ENCODE measurements at regions of chr1 and their contacts with region 1.

Region 1: DNA sequence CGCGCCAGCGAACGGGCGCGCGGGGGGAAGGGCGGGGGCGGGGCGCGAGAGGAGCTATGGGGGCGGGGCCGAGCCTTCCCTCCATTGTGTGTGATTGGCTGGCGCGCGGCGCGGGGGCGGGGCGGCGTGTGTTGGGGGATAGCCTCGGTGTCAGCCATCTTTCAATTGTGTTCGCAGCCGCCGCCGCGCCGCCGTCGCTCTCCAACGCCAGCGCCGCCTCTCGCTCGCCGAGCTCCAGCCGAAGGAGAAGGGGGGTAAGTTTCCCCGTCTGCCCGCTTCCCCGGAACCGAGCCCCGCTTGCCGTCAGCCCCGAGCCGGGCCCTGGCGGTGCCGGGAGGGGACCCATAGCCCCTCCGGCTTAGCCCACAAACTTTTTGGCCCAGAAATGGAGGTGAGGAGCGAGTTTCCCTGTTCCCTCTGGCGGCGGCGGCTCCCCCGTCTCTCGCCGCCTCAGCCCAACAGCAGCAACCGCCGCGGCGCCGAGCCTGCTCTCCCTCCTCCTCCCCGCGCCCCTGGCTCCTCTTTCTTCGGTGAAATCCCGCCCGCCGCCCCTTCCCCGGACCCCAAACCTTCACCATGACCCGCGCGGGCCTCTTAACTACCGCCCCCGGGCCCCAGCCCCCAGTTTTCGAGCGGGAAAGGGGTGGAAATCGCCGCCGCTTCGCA is at the start of gene H3-3A:
- H3K4me3 Mint-ChIP-seq: peak within 1 kb of the TSS; percentile 99
- H3K27ac Mint-ChIP-seq: peak within 1 kb of the TSS; percentile 99
- H3K4me1 Mint-ChIP-seq: peaks cover 40% of the 10 kb centered on the region
- H3K27me3 Mint-ChIP-seq: no peaks in the 10 kb centered on the region

Region 2: GRCh38 chr1:226034482-226034881 is 28.2 kb before region 1 on chr1:
- intact Hi-C with region 1: loop called (anchors 1 kb)
- H3K4me3 Mint-ChIP-seq: no peak overlapping the region
- H3K27ac Mint-ChIP-seq: peak overlapping the region; percentile 92
- H3K4me1 Mint-ChIP-seq: peaks cover 50% of the 10 kb centered on the region
- H3K27me3 Mint-ChIP-seq: no peaks in the 10 kb centered on the region

Region 3: GRCh38 chr1:226046240-226046639 is 16.5 kb before region 1 on chr1:
- intact Hi-C with region 1: loop called (anchors 2 kb)
- H3K4me3 Mint-ChIP-seq: no peak overlapping the region
- H3K27ac Mint-ChIP-seq: peak overlapping the region; percentile 26
- H3K4me1 Mint-ChIP-seq: peaks cover 57% of the 10 kb centered on the region
- H3K27me3 Mint-ChIP-seq: no peaks in the 10 kb centered on the region

Region 4: DNA sequence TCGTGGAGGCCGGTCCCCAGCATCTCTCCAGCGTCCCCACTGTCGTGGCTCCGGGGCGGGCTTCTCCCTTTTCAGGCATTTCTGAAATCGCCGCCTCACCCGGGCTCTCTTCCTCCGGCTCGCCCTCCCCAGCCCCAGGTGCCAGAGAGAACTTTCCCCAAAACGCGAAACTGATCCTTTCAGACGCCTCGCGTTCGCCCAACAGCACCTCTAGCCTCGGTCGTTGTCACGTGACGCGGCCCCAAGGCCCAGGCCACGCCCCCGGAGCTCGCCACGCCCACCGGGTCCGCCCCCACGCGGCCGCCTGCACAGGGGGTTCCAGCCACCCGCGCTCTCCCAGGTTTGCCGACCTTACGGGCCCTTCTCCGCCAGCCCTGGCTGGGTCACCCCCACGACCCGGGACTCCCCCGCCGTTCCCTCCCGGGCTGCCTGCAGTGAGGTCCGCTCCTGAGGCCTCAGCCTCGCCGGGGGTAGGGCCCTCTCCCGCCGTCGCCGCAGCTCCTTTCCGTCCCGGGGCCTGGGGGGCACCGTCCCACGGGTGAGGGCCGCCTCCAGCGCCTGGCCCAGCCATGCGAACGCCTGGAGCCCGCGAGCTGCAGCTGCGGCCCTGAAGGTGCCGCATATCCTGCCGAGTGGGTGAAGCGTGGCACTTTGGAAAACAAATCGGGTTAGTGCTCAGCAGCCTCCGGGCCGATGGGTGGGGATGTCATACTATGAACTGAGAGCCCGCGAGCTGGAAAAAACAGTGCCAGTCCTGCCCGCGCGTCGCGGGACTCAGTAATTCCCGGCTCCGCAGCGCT is 20.8 kb after region 1 on chr1:
- intact Hi-C with region 1: no loop called
- H3K4me3 Mint-ChIP-seq: peak overlapping the region; percentile 90
- H3K27ac Mint-ChIP-seq: peak overlapping the region; percentile 84
- H3K4me1 Mint-ChIP-seq: peaks cover 10% of the 10 kb centered on the region
- H3K27me3 Mint-ChIP-seq: peaks cover 23% of the 10 kb centered on the region

Region 5: DNA sequence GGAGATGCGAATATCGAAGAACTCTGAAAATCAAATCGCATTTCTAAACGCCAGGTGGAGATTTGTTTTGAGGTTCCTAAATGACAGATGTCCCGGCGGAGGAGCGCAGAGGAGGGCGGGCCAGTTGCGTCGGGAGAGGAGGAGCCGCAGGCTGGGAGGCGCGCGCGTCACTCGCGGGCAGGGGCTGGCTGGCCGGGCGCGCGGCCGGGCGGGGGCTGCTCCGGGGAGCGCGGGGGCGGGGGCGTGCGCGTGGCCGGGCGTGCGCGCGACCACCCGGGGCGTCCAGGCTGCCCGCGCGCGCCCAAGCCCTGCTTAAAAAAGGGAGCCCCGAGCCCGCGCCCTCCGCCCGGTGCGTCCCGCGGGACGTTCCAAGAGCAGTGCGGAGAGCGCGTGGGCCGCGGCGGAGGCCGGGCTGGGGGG is 47.1 kb after region 1 on chr1:
- intact Hi-C with region 1: loop called (anchors 2 kb)
- H3K4me3 Mint-ChIP-seq: peak overlapping the region; percentile 82
- H3K27ac Mint-ChIP-seq: peak overlapping the region; percentile 96
- H3K4me1 Mint-ChIP-seq: peaks cover 35% of the 10 kb centered on the region
- H3K27me3 Mint-ChIP-seq: peaks cover 9% of the 10 kb centered on the region

Region 6: DNA sequence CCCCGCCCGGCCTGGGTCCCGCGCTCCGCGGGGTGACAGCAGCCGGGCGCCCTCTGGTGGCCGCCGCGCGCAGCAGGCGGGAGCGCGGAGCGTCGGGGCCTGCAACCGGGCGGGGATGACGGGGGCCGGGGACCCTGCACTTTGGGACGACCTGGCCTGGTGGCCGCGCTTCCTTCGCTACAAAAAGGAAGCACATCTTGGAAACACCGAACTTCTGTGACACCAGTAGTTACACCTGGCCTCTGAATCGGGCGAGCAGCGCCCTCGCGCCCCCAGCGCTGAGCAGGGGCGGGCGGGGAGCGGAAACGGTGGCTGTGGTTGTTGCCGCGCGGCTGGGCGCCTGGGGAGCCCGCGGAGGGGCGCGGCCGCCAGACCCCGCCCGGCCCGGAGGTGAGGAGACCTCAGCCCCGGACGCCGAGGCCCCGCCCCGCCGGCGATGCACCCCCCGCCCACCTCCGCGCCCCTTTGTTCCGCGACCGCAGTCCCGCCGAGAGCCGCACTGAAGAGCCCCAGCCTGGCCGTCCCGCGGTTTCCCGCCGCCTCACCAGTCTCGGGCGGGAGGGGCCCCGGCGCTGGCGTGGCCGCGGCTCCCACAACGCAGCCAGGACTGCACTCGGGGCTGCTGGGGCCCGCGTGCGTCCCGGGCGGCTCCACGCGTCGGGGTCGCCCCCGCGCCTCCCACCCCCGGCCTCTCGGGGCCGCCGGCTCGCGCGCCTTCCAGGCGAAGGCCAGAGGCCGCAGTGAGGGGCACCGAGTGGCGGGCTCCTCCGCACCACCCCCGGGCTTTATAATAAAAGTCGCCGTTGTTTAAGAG is 59.1 kb after region 1 on chr1:
- intact Hi-C with region 1: loop called (anchors 1 kb)
- H3K4me3 Mint-ChIP-seq: peak overlapping the region; percentile 74
- H3K27ac Mint-ChIP-seq: peak overlapping the region; percentile 78
- H3K4me1 Mint-ChIP-seq: peaks cover 27% of the 10 kb centered on the region
- H3K27me3 Mint-ChIP-seq: peaks cover 49% of the 10 kb centered on the region

Region 7: DNA sequence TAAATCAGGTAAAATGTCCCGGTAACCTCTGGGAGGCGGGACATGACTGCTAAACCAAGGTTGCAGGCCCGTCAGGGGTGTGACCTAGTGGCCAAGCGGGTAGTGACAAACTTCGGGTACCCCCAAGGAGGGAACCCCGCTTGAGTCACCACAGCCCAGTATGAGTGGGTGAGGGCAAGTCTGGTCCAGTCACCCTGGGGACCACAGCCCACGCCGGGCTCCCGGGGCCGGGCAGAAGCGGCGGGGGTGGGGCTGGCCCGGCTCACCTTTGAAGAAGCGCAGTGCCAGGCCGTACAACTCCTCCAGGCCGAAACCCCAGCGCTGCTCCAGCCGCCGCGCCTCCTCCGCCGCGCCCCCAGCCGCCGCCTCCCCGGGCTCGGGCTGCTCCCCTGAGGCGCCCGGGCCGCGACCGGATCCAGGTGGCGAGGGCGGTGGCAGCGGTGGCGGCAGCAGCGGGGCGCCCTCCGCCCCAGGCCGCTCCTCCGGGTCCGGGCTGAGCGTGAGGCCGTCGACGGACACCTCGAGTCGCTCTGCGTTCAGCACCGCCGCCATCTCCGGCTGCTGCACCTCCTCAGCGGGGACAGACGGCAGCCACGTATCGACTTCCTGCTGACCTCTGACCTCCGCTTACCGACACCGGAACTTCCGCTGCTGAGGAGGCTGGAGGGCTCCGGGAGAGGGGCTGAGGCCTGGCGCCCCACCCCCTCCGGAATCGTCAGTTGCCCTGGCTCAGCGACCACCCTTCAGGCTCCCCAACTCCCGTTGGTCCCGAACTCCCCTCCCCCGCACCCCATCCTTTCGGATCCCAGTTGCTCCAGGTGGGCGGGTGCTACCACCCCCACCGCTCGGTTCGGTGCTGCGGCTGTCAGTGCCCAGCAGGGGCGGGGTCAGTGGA is 123.7 kb after region 1 on chr1 and contains the start of gene ACBD3:
- intact Hi-C with region 1: loop called (anchors 5 kb)
- H3K4me3 Mint-ChIP-seq: peak within 1 kb of the TSS; percentile 88
- H3K27ac Mint-ChIP-seq: peak within 1 kb of the TSS; percentile 91
- H3K4me1 Mint-ChIP-seq: peaks cover 38% of the 10 kb centered on the region
- H3K27me3 Mint-ChIP-seq: no peaks in the 10 kb centered on the region

Region 8: DNA sequence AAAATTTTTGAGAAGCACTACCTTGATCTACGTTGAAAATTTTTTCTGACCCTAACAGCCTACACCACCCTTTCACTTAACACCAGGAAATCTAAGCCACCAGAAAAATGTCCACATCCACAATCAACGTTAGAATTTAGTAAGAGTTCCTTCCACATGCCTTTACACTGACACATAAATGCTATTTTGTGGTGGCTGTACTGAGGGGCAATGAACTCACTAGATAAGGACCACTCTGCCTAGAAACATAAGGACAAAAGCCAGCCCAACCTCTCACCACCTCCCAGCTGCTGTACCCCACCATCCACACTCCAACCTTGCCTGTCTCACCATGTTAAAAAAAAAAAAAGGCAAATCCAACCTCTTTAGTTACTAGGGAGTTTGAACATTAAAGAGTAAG is 315.4 kb after region 1 on chr1:
- intact Hi-C with region 1: no loop called
- H3K4me3 Mint-ChIP-seq: no peak overlapping the region
- H3K27ac Mint-ChIP-seq: no peak overlapping the region
- H3K4me1 Mint-ChIP-seq: no peaks in the 10 kb centered on the region
- H3K27me3 Mint-ChIP-seq: no peaks in the 10 kb centered on the region

Measured in dendritic cell treated with granulocyte-macrophage colony-stimulating factor and Interleukin-4, amounts not matched to agents 40 ng/mL and 50 ng/mL, for 4 days (primary cell).